B cell (primary cell): ENCODE measurements at regions of chr12 and their contacts with region 1.

Region 1: GRCh38 chr12:109880016-109880931 is at the start of gene GLTP:
- DNase-seq: peak; percentile 95
- ATAC-seq: peak; percentile 98
- H3K4me3 ChIP-seq: peak within 1 kb of the TSS; percentile 73 to 91 (median 80)
- H3K4me3 Mint-ChIP-seq: peak within 1 kb of the TSS; percentile 83
- H3K27ac ChIP-seq: peak within 1 kb of the TSS; percentile 77 to 94
- H3K27ac Mint-ChIP-seq: peak within 1 kb of the TSS; percentile 84
- H3K4me1 ChIP-seq: peaks cover 36 to 43% of the 10 kb centered on the region in 2 donors
- H3K4me1 Mint-ChIP-seq: peaks cover 54% of the 10 kb centered on the region
- H3K27me3 ChIP-seq: no peaks in the 10 kb centered on the region
- H3K27me3 Mint-ChIP-seq: no peaks in the 10 kb centered on the region
- CTCF ChIP-seq: peak; percentile 55
- total RNA-seq, gene GLTP: 21.9 and 24.9 TPM in 2 replicates

Region 2: GRCh38 chr12:109518820-109519665 is 361.2 kb before region 1 on chr12:
- CTCF ChIA-PET with region 1: no interaction called
- POLR2A ChIA-PET with region 1: no interaction called
- intact Hi-C with region 1: loop called (anchors 1 kb)
- DNase-seq: peak; percentile 55
- ATAC-seq: peak; percentile 41
- H3K4me3 ChIP-seq: no peak overlapping the region
- H3K4me3 Mint-ChIP-seq: no peak overlapping the region
- H3K27ac ChIP-seq: no peak overlapping the region
- H3K27ac Mint-ChIP-seq: no peak overlapping the region
- H3K4me1 ChIP-seq: no peaks in the 10 kb centered on the region
- H3K4me1 Mint-ChIP-seq: no peaks in the 10 kb centered on the region
- H3K27me3 ChIP-seq: no peaks in the 10 kb centered on the region
- H3K27me3 Mint-ChIP-seq: no peaks in the 10 kb centered on the region
- CTCF ChIP-seq: peak; percentile 82

Region 3: DNA sequence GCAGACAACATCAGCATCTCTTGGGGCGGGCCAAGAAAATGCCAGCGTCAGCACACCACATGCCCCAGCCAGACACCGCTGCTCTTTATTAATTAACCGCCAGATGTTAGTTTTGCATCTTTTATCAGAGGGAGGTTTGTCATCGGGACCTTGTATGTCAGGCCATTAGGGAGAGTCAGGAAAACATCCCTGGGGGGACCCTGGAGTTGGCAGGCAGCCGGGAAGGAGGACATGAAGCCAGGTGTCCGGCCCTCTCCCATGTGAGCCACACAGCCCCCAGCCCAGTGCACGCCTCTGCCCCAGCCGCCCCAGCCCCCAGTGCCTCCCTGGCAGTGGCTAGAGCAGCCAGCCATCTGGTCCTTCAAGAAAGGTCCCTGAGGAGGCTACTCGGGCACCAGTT is 223.5 kb before region 1 on chr12:
- CTCF ChIA-PET with region 1: no interaction called
- POLR2A ChIA-PET with region 1: no interaction called
- intact Hi-C with region 1: no loop called
- DNase-seq: no peak
- ATAC-seq: no peak
- H3K4me3 ChIP-seq: no peak overlapping the region
- H3K4me3 Mint-ChIP-seq: no peak overlapping the region
- H3K27ac ChIP-seq: no peak overlapping the region
- H3K27ac Mint-ChIP-seq: no peak overlapping the region
- H3K4me1 ChIP-seq: no peaks in the 10 kb centered on the region
- H3K4me1 Mint-ChIP-seq: no peaks in the 10 kb centered on the region
- H3K27me3 ChIP-seq: peaks cover 0 to 11% (median 1%) of the 10 kb centered on the region in 4 experiments
- H3K27me3 Mint-ChIP-seq: peaks cover 14% of the 10 kb centered on the region
- CTCF ChIP-seq: no peak

Region 4: GRCh38 chr12:109713187-109713984 is 166.9 kb before region 1 on chr12 and contains the start of gene FAM222A:
- CTCF ChIA-PET with region 1: no interaction called
- POLR2A ChIA-PET with region 1: no interaction called
- intact Hi-C with region 1: loop called (anchors 1 kb)
- DNase-seq: peak; percentile 99
- ATAC-seq: peak; percentile 84
- H3K4me3 ChIP-seq: peak within 1 kb of the TSS in 4 of 5 experiments; percentile 53 to 80 (median 64)
- H3K4me3 Mint-ChIP-seq: peak within 1 kb of the TSS; percentile 85
- H3K27ac ChIP-seq: peak within 1 kb of the TSS in 1 of 2 donors; percentile 52
- H3K27ac Mint-ChIP-seq: peak within 1 kb of the TSS; percentile 82
- H3K4me1 ChIP-seq: peaks cover 10 to 11% of the 10 kb centered on the region in 2 donors
- H3K4me1 Mint-ChIP-seq: peaks cover 11% of the 10 kb centered on the region
- H3K27me3 ChIP-seq: peaks cover 0 to 59% (median 23%) of the 10 kb centered on the region in 4 experiments
- H3K27me3 Mint-ChIP-seq: peaks cover 37% of the 10 kb centered on the region
- CTCF ChIP-seq: no peak
- total RNA-seq, gene FAM222A: 4.6 and 4.7 TPM in 2 replicates

Region 5: DNA sequence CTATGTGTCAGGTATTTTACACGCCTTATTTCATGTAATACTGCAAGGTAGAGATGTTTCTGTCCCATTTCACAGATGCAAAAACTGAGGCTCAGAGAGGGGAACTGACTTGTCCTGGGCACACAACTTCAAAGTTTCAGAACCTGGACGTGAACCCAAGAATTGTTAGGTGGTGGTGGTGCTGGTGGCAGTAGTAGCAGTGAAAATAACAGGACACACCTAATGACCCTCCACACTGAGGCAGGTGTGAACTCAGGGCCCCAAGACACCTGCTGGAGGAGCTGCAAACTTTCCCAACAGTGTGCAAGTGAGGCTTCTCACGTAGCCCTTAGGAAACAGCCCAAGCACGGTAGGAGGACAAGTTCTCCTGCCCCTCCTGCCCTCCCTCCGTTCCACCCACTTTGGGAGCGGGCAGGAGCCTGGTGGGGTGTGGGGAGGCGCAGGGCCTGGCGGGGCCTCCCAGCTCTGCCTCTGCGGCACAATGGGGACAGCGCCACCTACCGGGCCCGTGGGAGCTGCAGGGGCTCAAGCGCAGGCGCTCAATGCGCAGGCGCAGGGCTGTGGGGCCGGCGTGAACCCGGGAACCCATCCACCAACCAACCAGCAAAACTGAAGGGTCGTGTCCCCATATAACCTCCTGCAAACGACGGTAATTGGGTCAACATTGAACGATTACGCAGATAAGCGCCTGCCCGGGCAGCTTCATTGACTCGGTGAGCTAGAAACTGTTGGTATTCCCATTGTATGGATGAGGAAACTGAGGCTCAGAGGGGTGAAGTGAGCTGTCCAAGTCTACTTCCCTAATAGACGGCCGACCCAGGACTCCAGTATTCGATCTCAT is 35.1 kb before region 1 on chr12:
- CTCF ChIA-PET with region 1: interaction called, 9 read pairs
- POLR2A ChIA-PET with region 1: no interaction called
- intact Hi-C with region 1: loop called (anchors 1 kb)
- DNase-seq: peak; percentile 89
- ATAC-seq: peak; percentile 99
- H3K4me3 ChIP-seq: peak overlapping the region in 3 of 5 experiments; percentile 17 to 38 (median 25)
- H3K4me3 Mint-ChIP-seq: peak overlapping the region; percentile 44
- H3K27ac ChIP-seq: no peak overlapping the region
- H3K27ac Mint-ChIP-seq: no peak overlapping the region
- H3K4me1 ChIP-seq: peaks cover 3 to 10% of the 10 kb centered on the region in 2 donors
- H3K4me1 Mint-ChIP-seq: peaks cover 10% of the 10 kb centered on the region
- H3K27me3 ChIP-seq: no peaks in the 10 kb centered on the region
- H3K27me3 Mint-ChIP-seq: no peaks in the 10 kb centered on the region
- CTCF ChIP-seq: peak; percentile 99

Region 6: GRCh38 chr12:109899783-109900751 is 19.8 kb after region 1 on chr12 and contains the start of gene TCHP:
- CTCF ChIA-PET with region 1: no interaction called
- POLR2A ChIA-PET with region 1: interaction called, 4 read pairs
- intact Hi-C with region 1: loop called (anchors 2 kb)
- DNase-seq: peak; percentile 88
- ATAC-seq: peak; percentile 92
- H3K4me3 ChIP-seq: peak within 1 kb of the TSS; percentile 66 to 83 (median 70)
- H3K4me3 Mint-ChIP-seq: peak within 1 kb of the TSS; percentile 92
- H3K27ac ChIP-seq: peak within 1 kb of the TSS; percentile 49 to 74
- H3K27ac Mint-ChIP-seq: peak within 1 kb of the TSS; percentile 96
- H3K4me1 ChIP-seq: peaks cover 13 to 24% of the 10 kb centered on the region in 2 donors
- H3K4me1 Mint-ChIP-seq: peaks cover 22% of the 10 kb centered on the region
- H3K27me3 ChIP-seq: no peaks in the 10 kb centered on the region
- H3K27me3 Mint-ChIP-seq: no peaks in the 10 kb centered on the region
- CTCF ChIP-seq: no peak
- total RNA-seq, gene TCHP: 29.4 and 35.8 TPM in 2 replicates

Region 7: DNA sequence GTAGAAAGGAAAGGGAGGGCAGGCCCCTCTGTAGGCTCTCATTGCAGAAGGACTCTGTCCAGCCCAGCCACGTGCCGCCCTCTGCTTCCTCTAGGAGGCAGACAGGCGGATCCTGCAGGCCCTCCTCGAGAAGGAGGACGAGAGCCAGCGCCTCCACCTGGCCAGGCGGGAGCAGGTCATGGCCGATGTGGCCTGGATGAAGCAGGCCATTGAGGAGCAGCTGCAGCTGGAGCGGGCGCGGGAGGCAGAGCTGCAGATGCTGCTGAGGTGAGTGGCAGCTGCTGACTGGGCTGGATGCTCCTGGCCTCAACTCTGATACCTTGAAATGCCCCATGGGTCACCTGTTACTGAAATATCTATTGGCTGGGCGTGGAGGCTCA is 30.7 kb after region 1 on chr12:
- CTCF ChIA-PET with region 1: no interaction called
- POLR2A ChIA-PET with region 1: no interaction called
- intact Hi-C with region 1: no loop called
- DNase-seq: no peak
- ATAC-seq: no peak
- H3K4me3 ChIP-seq: no peak overlapping the region
- H3K4me3 Mint-ChIP-seq: no peak overlapping the region
- H3K27ac ChIP-seq: no peak overlapping the region
- H3K27ac Mint-ChIP-seq: no peak overlapping the region
- H3K4me1 ChIP-seq: no peaks in the 10 kb centered on the region
- H3K4me1 Mint-ChIP-seq: no peaks in the 10 kb centered on the region
- H3K27me3 ChIP-seq: no peaks in the 10 kb centered on the region
- H3K27me3 Mint-ChIP-seq: no peaks in the 10 kb centered on the region
- CTCF ChIP-seq: no peak

Region 8: DNA sequence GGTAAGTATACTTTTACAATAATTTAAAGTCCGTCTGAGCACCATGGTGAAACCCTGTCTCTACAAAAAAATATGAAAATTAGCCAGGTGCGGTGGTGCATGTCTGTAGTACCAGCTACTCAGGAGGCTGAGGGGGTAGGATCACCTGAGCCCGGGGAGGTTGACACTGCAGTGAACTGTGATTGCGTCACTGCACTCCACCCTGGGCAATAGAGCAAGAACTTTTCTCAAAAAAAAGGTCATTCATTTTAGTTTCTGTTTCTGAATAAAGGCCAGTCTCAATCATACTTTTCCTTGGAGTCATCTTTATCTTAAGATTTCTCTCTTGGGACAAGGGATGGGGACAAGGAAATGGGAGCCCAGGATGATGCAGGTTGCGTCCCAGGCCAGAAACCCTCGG is 131.9 kb after region 1 on chr12:
- CTCF ChIA-PET with region 1: no interaction called
- POLR2A ChIA-PET with region 1: no interaction called
- intact Hi-C with region 1: loop called (anchors 1 kb)
- DNase-seq: peak; percentile 94
- ATAC-seq: peak; percentile 95
- H3K4me3 ChIP-seq: peak overlapping the region in 3 of 5 experiments; percentile 40 to 53 (median 43)
- H3K4me3 Mint-ChIP-seq: peak overlapping the region; percentile 91
- H3K27ac ChIP-seq: peak overlapping the region; percentile 89 to 97
- H3K27ac Mint-ChIP-seq: peak overlapping the region; percentile 95
- H3K4me1 ChIP-seq: peaks cover 57 to 69% of the 10 kb centered on the region in 2 donors
- H3K4me1 Mint-ChIP-seq: peaks cover 64% of the 10 kb centered on the region
- H3K27me3 ChIP-seq: no peaks in the 10 kb centered on the region
- H3K27me3 Mint-ChIP-seq: no peaks in the 10 kb centered on the region
- CTCF ChIP-seq: no peak

Region 9: DNA sequence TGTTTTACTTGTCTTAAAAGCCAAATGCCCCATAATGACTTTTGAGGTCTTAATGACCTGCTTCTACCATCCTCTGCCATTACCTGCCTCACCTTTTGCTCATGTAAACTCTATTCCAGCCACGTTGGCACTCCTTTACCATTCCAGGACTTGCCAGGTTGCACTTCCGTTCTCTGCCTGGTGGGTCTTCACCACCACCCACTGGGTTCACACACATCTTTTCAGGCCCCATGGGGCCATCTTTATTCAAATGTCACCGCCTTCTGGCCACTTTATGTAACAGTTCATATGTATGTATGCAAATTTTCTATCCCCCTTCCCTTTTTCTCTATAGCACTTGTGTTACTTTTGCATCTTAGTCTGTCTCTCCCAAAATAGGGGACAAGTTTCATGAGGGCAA is 458.5 kb after region 1 on chr12:
- CTCF ChIA-PET with region 1: no interaction called
- POLR2A ChIA-PET with region 1: no interaction called
- intact Hi-C with region 1: no loop called
- DNase-seq: peak; percentile 47
- ATAC-seq: peak; percentile 51
- H3K4me3 ChIP-seq: no peak overlapping the region
- H3K4me3 Mint-ChIP-seq: no peak overlapping the region
- H3K27ac ChIP-seq: no peak overlapping the region
- H3K27ac Mint-ChIP-seq: no peak overlapping the region
- H3K4me1 ChIP-seq: peaks cover 4 to 9% of the 10 kb centered on the region in 2 donors
- H3K4me1 Mint-ChIP-seq: peaks cover 11% of the 10 kb centered on the region
- H3K27me3 ChIP-seq: no peaks in the 10 kb centered on the region
- H3K27me3 Mint-ChIP-seq: no peaks in the 10 kb centered on the region
- CTCF ChIP-seq: peak; percentile 40